Natural killer cell (primary cell): ENCODE measurements at regions of chr10 and their contacts with region 1.

Region 1: DNA sequence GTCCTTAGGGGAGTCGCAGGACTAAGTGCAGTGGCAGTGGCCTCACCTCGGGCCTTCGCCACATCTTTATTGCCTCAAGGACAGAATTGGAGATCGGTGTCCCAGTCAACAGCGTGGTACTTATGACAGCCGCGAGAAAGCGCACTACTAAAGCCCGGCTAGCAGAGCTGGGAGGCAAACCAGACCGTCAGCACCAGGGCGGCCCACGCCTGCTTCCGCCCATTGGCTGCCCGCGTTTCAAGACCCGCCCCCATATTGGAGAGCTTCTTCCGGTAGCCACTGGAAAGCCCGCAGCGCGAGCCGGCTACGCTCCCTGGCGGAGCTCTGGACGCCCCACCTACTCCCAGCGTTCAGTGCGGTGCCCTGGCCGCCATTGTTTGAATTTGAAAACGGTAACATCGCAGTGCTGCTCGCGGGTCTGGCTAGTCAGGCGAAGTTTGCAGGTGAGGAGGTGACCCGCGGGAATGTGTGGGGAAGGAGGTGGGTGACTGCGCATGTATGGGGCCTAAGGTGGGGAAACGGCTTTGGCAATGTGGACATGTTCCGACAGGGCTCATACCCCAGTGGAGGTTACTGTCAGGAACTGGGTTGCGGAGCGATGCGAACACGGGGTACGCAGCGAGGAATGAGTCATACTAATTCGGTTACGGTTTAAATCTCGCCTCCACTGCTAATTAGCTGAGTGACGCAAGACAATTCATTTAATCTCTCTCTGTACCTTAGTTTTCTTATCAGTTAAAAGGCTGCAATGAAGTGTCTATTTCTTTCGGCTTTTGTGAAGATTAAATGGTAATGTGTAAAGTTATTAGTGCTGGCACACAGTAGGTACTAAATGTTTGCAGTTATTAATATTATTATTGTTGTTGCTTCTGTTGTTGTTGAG is at the start of gene KIF20B:
- DNase-seq: peak; percentile 93 to 96
- ATAC-seq: peak; percentile 95 to 99 (median 97)
- H3K4me3 ChIP-seq: peak within 1 kb of the TSS; percentile 66
- H3K4me3 Mint-ChIP-seq: peak within 1 kb of the TSS; percentile 99
- H3K27ac ChIP-seq: peak within 1 kb of the TSS; percentile 78
- H3K27ac Mint-ChIP-seq: peak within 1 kb of the TSS; percentile 95 to 100
- H3K4me1 ChIP-seq: peaks cover 5% of the 10 kb centered on the region
- H3K4me1 Mint-ChIP-seq: peaks cover 18 to 22% of the 10 kb centered on the region in 2 donors
- H3K27me3 ChIP-seq: no peaks in the 10 kb centered on the region
- H3K27me3 Mint-ChIP-seq: no peaks in the 10 kb centered on the region
- CTCF ChIP-seq: no peak
- total RNA-seq, gene KIF20B: 17.2 to 20.2 (median 17.3) TPM

Region 2: DNA sequence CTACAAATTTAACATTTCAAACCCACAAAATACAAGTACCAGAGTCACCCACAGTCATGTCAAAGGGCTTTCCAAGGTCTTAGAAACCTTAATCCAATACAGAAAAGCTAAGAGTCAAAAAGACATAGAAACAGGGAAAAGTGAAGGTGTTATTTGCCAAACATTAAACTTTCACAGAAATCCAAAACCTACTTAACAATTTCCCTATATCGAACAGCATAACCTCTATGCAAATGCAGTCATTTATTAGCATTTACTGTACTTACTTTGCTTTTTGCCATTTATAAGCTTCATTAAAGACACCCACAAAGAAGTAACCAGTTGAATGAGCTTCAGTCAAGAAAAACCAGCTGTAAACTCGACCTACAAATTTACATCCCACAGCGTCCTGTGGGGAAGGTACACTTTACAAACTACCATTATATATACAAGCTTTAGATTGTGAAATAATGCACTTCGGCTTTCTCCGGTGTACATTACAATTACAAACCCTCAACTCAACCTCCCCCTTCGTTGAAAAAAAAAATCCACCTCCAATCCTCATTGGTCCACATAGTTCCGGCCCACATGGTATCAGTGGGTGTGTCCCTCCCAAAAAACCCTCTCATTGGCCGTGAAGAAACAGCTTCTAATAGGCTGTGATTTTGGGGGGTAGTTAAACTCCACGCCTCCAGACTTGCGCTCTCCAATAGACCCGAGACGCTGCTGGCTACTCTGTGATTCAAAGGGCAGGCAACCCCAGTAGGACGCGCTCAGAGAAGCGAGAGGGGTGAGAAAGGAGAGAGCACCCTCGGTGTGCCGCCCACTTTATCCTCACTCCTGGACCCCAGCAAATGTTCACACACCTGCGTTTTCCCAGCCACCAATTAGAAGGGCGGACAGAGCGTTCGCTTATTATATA is 57.8 kb before region 1 on chr10:
- intact Hi-C with region 1: loop called (anchors 1 kb)
- DNase-seq: peak; percentile 55 to 86
- ATAC-seq: peak; percentile 92 to 95 (median 92)
- H3K4me3 ChIP-seq: peak overlapping the region; percentile 55
- H3K4me3 Mint-ChIP-seq: no peak overlapping the region
- H3K27ac ChIP-seq: no peak overlapping the region
- H3K27ac Mint-ChIP-seq: no peak overlapping the region
- H3K4me1 ChIP-seq: peaks cover 7% of the 10 kb centered on the region
- H3K4me1 Mint-ChIP-seq: peaks cover 9% of the 10 kb centered on the region in 2 donors
- H3K27me3 ChIP-seq: peaks cover 2% of the 10 kb centered on the region
- H3K27me3 Mint-ChIP-seq: peaks cover 7 to 9% of the 10 kb centered on the region in 2 donors
- CTCF ChIP-seq: no peak

Region 3: DNA sequence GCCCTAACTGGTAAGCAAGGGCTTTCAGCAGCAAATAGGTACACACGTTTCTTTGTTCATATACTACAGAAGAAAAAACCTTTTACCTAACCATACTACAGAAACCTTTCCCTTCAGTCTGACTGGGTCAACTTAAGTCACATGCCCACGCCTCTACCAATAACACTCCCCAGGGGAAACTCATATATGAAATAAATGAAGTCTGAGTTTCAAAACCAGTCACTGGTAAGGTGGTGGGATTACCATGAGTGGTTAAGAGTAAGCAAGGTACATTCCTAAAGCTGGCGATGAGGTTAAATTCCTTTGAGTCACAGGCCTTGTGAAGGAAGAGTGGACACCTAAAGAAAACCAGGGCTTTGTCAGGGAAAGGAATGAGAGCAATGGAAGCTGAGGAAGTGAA is 21.5 kb before region 1 on chr10:
- intact Hi-C with region 1: loop called (anchors 1 kb)
- DNase-seq: no peak
- ATAC-seq: no peak
- H3K4me3 ChIP-seq: no peak overlapping the region
- H3K4me3 Mint-ChIP-seq: no peak overlapping the region
- H3K27ac ChIP-seq: no peak overlapping the region
- H3K27ac Mint-ChIP-seq: no peak overlapping the region
- H3K4me1 ChIP-seq: no peaks in the 10 kb centered on the region
- H3K4me1 Mint-ChIP-seq: no peaks in the 10 kb centered on the region
- H3K27me3 ChIP-seq: no peaks in the 10 kb centered on the region
- H3K27me3 Mint-ChIP-seq: peaks cover 10 to 46% of the 10 kb centered on the region in 2 donors
- CTCF ChIP-seq: no peak